Activated CD4-positive, alpha-beta T cell treated with anti-CD3 and anti-CD28 coated beads, Interleukin-2, amount 10 ng/mL, durations not matched to agents 24 days and 14 days (primary cell): ENCODE measurements at regions of chr12 and their contacts with region 1.

Region 1: DNA sequence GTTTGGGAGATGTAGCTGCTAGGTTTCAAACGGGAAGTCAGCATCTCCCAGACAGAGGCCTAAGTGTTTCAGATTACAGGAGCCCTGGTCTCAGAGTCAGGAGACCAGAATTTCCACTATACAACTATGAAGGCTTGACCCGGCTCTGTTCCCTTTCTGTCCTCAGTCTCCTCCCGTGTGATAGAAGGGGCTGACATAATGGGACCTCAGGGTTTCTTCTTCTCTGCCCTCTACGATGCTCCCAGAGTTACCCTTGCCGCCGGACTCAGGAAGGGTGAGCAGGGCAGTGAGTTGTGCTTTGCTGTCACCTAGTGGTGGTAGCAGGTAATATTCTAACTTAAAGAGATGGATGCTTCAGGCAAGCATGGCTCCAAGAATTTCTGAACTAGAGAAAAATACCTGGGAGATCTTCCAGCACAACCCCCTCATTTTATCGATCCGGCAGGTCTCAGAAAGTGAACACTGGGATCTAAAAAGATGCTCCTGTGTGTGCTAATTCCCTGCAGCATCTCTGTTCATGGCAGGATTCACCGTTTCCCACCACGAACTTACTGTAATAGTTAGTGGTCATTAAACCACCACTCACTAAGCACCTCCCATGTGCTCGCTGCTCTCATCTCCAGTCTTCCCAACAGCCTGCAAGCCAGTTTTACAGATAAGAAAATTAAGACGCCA is 84.4 kb downstream of the VWF start:
- DNase-seq: peak; percentile 83
- H3K4me3 Mint-ChIP-seq: no peak overlapping the region
- H3K27ac Mint-ChIP-seq: no peak overlapping the region
- H3K4me1 Mint-ChIP-seq: no peaks in the 10 kb centered on the region
- H3K27me3 Mint-ChIP-seq: no peaks in the 10 kb centered on the region

Region 2: GRCh38 chr12:5889381-5890047 is 150.5 kb before region 1 on chr12:
- intact Hi-C with region 1: no loop called
- DNase-seq: peak; percentile 65
- H3K4me3 Mint-ChIP-seq: no peak overlapping the region
- H3K27ac Mint-ChIP-seq: no peak overlapping the region
- H3K4me1 Mint-ChIP-seq: peaks cover 4% of the 10 kb centered on the region
- H3K27me3 Mint-ChIP-seq: peaks cover 27% of the 10 kb centered on the region

Region 3: GRCh38 chr12:5965950-5966383 is 74.1 kb before region 1 on chr12:
- intact Hi-C with region 1: loop called (anchors 5 kb)
- DNase-seq: peak; percentile 81
- H3K4me3 Mint-ChIP-seq: no peak overlapping the region
- H3K27ac Mint-ChIP-seq: no peak overlapping the region
- H3K4me1 Mint-ChIP-seq: no peaks in the 10 kb centered on the region
- H3K27me3 Mint-ChIP-seq: peaks cover 10% of the 10 kb centered on the region

Region 4: GRCh38 chr12:5988659-5989116 is 51.3 kb before region 1 on chr12:
- intact Hi-C with region 1: loop called (anchors 1 kb)
- DNase-seq: peak; percentile 91
- H3K4me3 Mint-ChIP-seq: no peak overlapping the region
- H3K27ac Mint-ChIP-seq: no peak overlapping the region
- H3K4me1 Mint-ChIP-seq: peaks cover 2% of the 10 kb centered on the region
- H3K27me3 Mint-ChIP-seq: peaks cover 3% of the 10 kb centered on the region

Region 5: GRCh38 chr12:6154730-6155459 is 114.9 kb after region 1 on chr12:
- intact Hi-C with region 1: no loop called
- DNase-seq: no peak
- H3K4me3 Mint-ChIP-seq: no peak overlapping the region
- H3K27ac Mint-ChIP-seq: no peak overlapping the region
- H3K4me1 Mint-ChIP-seq: peaks cover 6% of the 10 kb centered on the region
- H3K27me3 Mint-ChIP-seq: peaks cover 6% of the 10 kb centered on the region

Region 6: DNA sequence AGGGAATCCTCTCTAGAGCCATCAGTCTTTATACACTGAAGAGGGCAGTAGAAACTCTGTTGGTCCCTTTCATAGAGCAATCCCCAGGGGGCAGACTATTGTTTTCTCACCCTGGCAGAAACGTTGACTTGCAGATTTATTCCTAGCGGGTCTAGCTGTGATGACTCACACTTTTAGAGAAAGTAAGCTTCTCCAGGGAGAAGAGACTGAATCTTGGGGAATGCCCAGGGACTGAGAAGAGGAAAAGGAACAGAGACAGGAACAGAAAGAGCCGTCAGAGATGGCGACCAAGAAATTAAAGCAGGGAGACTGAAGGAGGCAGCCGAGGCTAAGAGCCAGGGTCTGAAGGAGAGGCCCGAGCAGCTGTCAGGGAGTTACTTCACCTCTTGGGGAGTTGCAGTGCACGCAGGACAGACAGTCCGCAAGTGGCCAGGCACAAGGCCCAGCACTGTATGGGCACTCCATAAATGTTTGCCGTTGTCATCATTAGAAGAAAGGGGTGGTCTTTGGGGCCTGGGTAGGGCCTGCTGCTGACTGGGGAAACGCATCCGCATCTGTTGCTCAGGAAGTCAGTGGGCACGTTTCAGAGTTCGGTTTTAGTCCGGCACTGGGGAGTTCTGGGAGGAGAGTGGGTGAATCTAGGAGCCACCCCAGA is 283.4 kb after region 1 on chr12:
- intact Hi-C with region 1: no loop called
- DNase-seq: peak; percentile 81
- H3K4me3 Mint-ChIP-seq: peak overlapping the region; percentile 62
- H3K27ac Mint-ChIP-seq: peak overlapping the region; percentile 85
- H3K4me1 Mint-ChIP-seq: peaks cover 33% of the 10 kb centered on the region
- H3K27me3 Mint-ChIP-seq: no peaks in the 10 kb centered on the region